ENCODE measurements at regions of chr15 and their contacts with region 1.

Region 1: GRCh38 chr15:100596792-100597191 is 5.2 kb downstream of the LINS1 start:
- DNase-seq: peak; percentile 52 to 97 (median 94)
- ATAC-seq: peak; percentile 93
- H3K4me3 ChIP-seq: peak overlapping the region; percentile 49
- H3K4me3 Mint-ChIP-seq: peak overlapping the region in 7 of 10 donors; percentile 69 to 87 (median 86)
- H3K27ac ChIP-seq: peak overlapping the region; percentile 91
- H3K27ac Mint-ChIP-seq: peak overlapping the region in 4 of 9 donors; percentile 96 to 98 (median 96)
- H3K4me1 ChIP-seq: peaks cover 52 to 82% of the 10 kb centered on the region in 2 donors
- H3K4me1 Mint-ChIP-seq: peaks cover 0 to 78% (median 51%) of the 10 kb centered on the region in 7 donors
- H3K27me3 ChIP-seq: no peaks in the 10 kb centered on the region
- H3K27me3 Mint-ChIP-seq: peaks cover 0 to 2% (median 0%) of the 10 kb centered on the region in 5 donors

Region 2: DNA sequence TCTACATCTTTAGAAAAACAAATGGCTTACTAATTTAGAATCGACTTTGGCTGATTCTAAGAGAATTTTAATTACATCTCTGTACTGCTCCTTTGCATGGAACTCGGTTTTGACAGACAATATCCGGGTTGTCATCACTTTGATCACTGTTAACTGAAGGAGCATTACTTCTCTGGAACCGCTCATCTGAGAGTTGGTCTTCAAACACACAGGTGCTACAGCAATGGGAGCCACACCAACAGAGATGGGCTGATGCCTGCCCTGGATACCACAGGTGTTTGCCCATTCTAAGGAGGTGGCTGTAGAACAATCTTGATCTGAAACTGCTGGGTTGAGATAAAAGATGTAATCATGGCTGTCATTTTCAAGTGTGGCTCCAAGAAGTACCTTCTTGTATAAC is 16.4 kb before region 1 on chr15:
- CTCF ChIA-PET with region 1: no interaction called
- POLR2A ChIA-PET with region 1: interaction called, 10 read pairs
- intact Hi-C with region 1: loop called (anchors 1 to 2 kb)
- DNase-seq: peak in 2 of 9 donors; percentile 13 to 30
- ATAC-seq: peak; percentile 51
- H3K4me3 ChIP-seq: no peak overlapping the region
- H3K4me3 Mint-ChIP-seq: peak overlapping the region in 8 of 10 donors; percentile 46 to 76 (median 60)
- H3K27ac ChIP-seq: peak overlapping the region; percentile 52
- H3K27ac Mint-ChIP-seq: peak overlapping the region; percentile 73 to 95 (median 88)
- H3K4me1 ChIP-seq: peaks cover 0 to 6% of the 10 kb centered on the region in 2 donors
- H3K4me1 Mint-ChIP-seq: peaks cover 18 to 81% (median 71%) of the 10 kb centered on the region in 7 donors
- H3K27me3 ChIP-seq: no peaks in the 10 kb centered on the region
- H3K27me3 Mint-ChIP-seq: no peaks in the 10 kb centered on the region